ENCODE measurements at regions of chr11 and their contacts with region 1.

Region 1: DNA sequence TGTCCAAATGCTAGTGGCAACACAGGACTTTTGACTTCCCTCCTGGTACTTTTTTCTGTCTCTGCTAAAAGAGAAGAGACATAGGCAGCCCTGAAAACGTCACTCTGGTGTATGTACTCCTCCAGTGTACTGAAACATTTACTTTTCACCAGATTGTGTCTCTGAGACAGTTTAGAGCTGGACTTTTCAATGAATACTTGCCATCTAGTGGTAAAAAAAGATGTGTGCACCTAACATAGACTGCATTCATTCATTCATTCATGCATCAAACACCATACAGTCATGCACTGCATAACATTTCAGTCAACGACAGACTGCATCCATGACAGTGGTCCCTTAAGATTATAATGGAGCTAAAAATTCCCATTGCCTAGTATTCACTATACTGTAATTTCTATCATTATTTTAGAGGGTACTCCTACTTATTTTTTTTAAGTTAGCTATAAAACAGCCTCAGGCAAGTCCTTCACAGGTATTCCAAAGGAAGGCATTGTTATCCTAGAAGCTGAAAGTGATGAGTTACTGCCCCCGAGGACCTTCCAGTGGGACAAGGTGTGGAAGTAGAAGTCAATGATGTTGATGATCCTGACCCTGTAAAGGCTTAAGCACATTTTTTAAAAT is 186.2 kb downstream of the SPON1 start:
- DNase-seq: peak in 4 of 5 donors; percentile 39 to 51 (median 42)
- H3K4me3 ChIP-seq: no peak overlapping the region
- H3K4me3 Mint-ChIP-seq: no peak overlapping the region
- H3K27ac ChIP-seq: no peak overlapping the region
- H3K27ac Mint-ChIP-seq: peak overlapping the region in 1 of 7 donors; percentile 10
- H3K4me1 ChIP-seq: no peaks in the 10 kb centered on the region
- H3K4me1 Mint-ChIP-seq: peaks cover 0 to 4% (median 1%) of the 10 kb centered on the region in 4 donors
- H3K27me3 ChIP-seq: no peaks in the 10 kb centered on the region
- H3K27me3 Mint-ChIP-seq: no peaks in the 10 kb centered on the region

Region 2: DNA sequence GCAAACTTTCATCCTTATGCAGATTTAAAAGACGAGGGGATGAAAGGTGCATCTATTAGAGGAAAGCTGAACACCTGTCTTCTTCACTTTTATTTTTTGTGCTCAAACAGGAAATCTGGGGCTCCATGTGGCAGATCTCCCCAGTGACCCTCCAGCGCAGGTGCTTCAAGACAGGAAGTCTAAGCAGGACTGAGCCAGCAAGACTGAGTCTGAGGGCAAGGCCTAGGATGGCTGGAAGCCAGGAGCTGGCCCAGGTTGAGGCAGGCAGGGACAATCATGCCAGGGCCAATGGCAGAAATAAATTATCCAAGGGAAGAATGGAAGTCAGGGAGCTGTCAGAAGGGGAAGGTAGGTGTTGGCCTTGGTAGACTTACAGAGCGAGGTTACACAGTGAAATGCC is 287.4 kb before region 1 on chr11:
- CTCF ChIA-PET with region 1: interaction called, 18 read pairs
- POLR2A ChIA-PET with region 1: no interaction called
- intact Hi-C with region 1: loop called (anchors 1 kb)
- DNase-seq: peak in 3 of 5 donors; percentile 16 to 25 (median 24)
- H3K4me3 ChIP-seq: no peak overlapping the region
- H3K4me3 Mint-ChIP-seq: peak overlapping the region in 7 of 8 donors; percentile 2 to 64 (median 33)
- H3K27ac ChIP-seq: no peak overlapping the region
- H3K27ac Mint-ChIP-seq: peak overlapping the region; percentile 37 to 90 (median 83)
- H3K4me1 ChIP-seq: peaks cover 23% of the 10 kb centered on the region
- H3K4me1 Mint-ChIP-seq: peaks cover 18 to 35% (median 31%) of the 10 kb centered on the region in 4 donors
- H3K27me3 ChIP-seq: no peaks in the 10 kb centered on the region
- H3K27me3 Mint-ChIP-seq: no peaks in the 10 kb centered on the region

Region 3: GRCh38 chr11:13970986-13971385 is 177.8 kb before region 1 on chr11:
- CTCF ChIA-PET with region 1: interaction called, 46 read pairs
- POLR2A ChIA-PET with region 1: no interaction called
- intact Hi-C with region 1: no loop called
- DNase-seq: no peak
- H3K4me3 ChIP-seq: no peak overlapping the region
- H3K4me3 Mint-ChIP-seq: no peak overlapping the region
- H3K27ac ChIP-seq: no peak overlapping the region
- H3K27ac Mint-ChIP-seq: peak overlapping the region in 4 of 7 donors; percentile 2 to 58 (median 33)
- H3K4me1 ChIP-seq: no peaks in the 10 kb centered on the region
- H3K4me1 Mint-ChIP-seq: peaks cover 0 to 9% (median 7%) of the 10 kb centered on the region in 4 donors
- H3K27me3 ChIP-seq: no peaks in the 10 kb centered on the region
- H3K27me3 Mint-ChIP-seq: peaks cover 5 to 6% of the 10 kb centered on the region in 2 donors